Lower leg skin (tissue), 4 donors: ENCODE measurements at regions of chr1 and their contacts with region 1.

Region 1: DNA sequence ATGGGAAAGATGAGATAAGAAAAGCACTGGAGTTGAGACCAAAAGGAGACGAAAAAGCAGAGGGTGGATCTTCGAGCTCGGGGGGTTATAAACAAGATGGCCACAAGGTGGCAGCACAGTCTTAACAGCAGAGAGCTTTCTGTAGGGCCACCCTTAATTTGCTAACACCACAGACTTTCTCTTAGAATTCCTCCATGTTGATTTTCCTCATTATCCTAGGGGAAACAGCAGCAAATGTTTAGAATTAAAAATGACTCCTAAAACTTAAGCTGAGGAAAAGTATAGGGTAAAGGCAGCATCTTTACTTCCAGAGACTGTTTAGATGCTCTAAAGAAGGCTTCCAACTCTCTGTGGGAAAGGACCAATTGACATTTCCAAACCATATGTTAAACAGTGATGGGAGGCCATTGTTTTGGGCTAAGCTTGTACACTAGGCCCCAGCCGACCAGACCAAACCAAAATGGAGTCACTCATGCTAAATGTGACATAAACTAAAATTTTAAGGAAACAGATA is 2.5 kb upstream of the APOBEC4 start:
- DNase-seq: peak; percentile 81 to 96
- H3K4me3 ChIP-seq: no peak overlapping the region
- CTCF ChIP-seq: no peak
- POLR2A ChIP-seq: no peak

Region 2: GRCh38 chr1:183915625-183916510 is 260.2 kb after region 1 on chr1:
- intact Hi-C with region 1: loop called (anchors 2 kb)
- DNase-seq: peak; percentile 87 to 90
- H3K4me3 ChIP-seq: no peak overlapping the region
- CTCF ChIP-seq: peak in 1 of 3 donors; percentile 69
- POLR2A ChIP-seq: no peak